WTC11 (cell line): ENCODE measurements at regions of chr16 and their contacts with region 1.

Region 1: GRCh38 chr16:15777533-15778203 is 79.2 kb downstream of the MYH11 start:
- DNase-seq: peak; percentile 58
- ATAC-seq: peak; percentile 99
- H3K4me3 Mint-ChIP-seq: no peak overlapping the region
- H3K27ac Mint-ChIP-seq: no peak overlapping the region
- H3K4me1 Mint-ChIP-seq: peaks cover 3% of the 10 kb centered on the region; the same call in 1 of the 2 replicates
- H3K27me3 Mint-ChIP-seq: peaks cover 9% of the 10 kb centered on the region
- CTCF ChIP-seq: no peak

Region 2: GRCh38 chr16:15811481-15812400 is 34.1 kb after region 1 on chr16:
- CTCF ChIA-PET with region 1: interaction called, 17 read pairs
- POLR2A ChIA-PET with region 1: no interaction called
- DNase-seq: no peak
- ATAC-seq: no peak
- H3K4me3 Mint-ChIP-seq: no peak overlapping the region
- H3K27ac Mint-ChIP-seq: no peak overlapping the region
- H3K4me1 Mint-ChIP-seq: peaks cover 11% of the 10 kb centered on the region; the same call in 1 of the 2 replicates
- H3K27me3 Mint-ChIP-seq: peaks cover 16% of the 10 kb centered on the region
- CTCF ChIP-seq: no peak

Region 3: DNA sequence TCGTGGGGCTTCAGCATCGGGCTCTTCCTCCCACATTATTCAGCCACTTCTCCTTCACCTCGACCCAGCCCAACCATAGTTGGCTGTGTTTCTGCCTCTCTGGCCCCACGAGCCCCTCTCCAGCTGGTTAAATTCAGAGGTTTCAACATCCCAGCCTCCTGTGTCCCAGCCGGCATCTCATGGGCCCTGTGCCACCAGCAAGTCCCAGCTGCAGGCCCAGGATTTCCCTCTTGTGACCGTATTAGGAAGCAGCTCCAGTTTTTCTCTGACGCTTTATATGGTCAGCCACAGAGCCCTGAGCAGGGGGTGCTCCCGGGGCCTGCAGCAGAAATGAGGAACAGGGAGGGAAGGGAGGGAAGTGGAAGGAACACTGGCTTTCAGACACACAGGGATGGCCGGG is 51.8 kb after region 1 on chr16:
- CTCF ChIA-PET with region 1: interaction called, 13 read pairs
- POLR2A ChIA-PET with region 1: no interaction called
- DNase-seq: peak; percentile 21
- ATAC-seq: peak; percentile 70
- H3K4me3 Mint-ChIP-seq: no peak overlapping the region
- H3K27ac Mint-ChIP-seq: no peak overlapping the region
- H3K4me1 Mint-ChIP-seq: no peaks in the 10 kb centered on the region
- H3K27me3 Mint-ChIP-seq: no peaks in the 10 kb centered on the region
- CTCF ChIP-seq: no peak

Region 4: GRCh38 chr16:15874745-15875314 is 97.2 kb after region 1 on chr16:
- CTCF ChIA-PET with region 1: interaction called, 20 read pairs
- POLR2A ChIA-PET with region 1: no interaction called
- DNase-seq: peak; percentile 58
- ATAC-seq: peak; percentile 79
- H3K4me3 Mint-ChIP-seq: no peak overlapping the region
- H3K27ac Mint-ChIP-seq: peak overlapping the region; percentile 55
- H3K4me1 Mint-ChIP-seq: no peaks in the 10 kb centered on the region
- H3K27me3 Mint-ChIP-seq: no peaks in the 10 kb centered on the region
- CTCF ChIP-seq: peak; percentile 31; the same call in 1 of the 2 replicates